Naive thymus-derived CD4-positive, alpha-beta T cell (primary cell): ENCODE measurements at regions of chr4 and their contacts with region 1.

Region 1: DNA sequence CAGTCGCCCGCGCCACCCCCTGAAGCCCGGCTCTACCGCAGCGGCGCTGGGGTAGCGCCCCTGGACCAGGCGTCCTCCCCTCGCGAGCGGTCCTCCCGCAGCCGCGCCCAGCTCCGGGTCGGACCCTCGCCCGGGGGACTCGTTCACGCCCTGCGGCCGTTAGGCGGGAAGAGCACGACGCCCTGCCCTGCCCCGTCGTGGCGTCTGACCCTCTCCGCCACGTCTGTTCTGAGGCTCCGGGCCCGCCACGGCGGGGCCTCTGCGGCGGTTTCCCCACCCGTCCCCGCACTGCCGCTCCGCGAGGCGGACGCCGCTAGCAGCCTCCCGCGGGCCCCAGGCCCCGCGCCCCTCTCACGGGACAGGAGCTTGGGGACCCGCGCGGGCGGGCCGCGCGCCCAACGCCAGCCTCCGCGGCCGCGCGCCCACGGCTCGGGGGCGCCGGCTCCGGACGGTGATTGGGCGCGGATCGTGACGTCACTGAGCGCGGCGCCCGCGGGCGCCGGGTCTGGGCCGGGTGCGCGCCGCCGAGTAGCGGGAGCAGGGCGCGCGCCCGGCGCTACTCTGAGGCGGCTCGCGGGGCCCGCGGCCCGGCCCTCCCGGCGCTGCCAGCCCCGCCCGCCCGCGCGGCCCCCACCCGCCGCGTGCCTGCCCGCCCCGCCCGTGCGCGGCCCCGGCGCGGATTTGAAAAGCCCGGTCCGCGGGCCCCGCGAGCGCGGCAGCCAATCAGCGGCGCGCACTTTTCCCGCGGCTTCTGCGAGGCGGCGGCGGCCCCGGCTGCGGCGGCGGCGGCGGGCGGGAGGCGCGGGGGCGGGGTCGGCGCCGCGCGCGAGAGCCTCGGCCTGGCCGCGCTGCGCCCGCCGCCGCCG is at the start of gene NSD2:
- DNase-seq: peak; percentile 79 to 95 (median 86)
- ATAC-seq: peak; percentile 86
- H3K4me3 ChIP-seq: peak within 1 kb of the TSS; percentile 86
- H3K4me3 Mint-ChIP-seq: peak within 1 kb of the TSS; percentile 84 to 98 (median 89)
- H3K27ac ChIP-seq: peak within 1 kb of the TSS; percentile 99
- H3K27ac Mint-ChIP-seq: peak within 1 kb of the TSS; percentile 91 to 96 (median 95)
- H3K4me1 ChIP-seq: peaks cover 15 to 20% of the 10 kb centered on the region in 2 donors
- H3K4me1 Mint-ChIP-seq: peaks cover 12 to 37% (median 34%) of the 10 kb centered on the region in 7 donors
- H3K27me3 ChIP-seq: no peaks in the 10 kb centered on the region
- H3K27me3 Mint-ChIP-seq: peaks cover 0 to 4% (median 0%) of the 10 kb centered on the region in 5 donors
- total RNA-seq, gene NSD2: 35.4 to 207 (median 38.5) TPM

Region 2: GRCh38 chr4:1139860-1140259 is 731.0 kb before region 1 on chr4:
- CTCF ChIA-PET with region 1: no interaction called
- POLR2A ChIA-PET with region 1: no interaction called
- intact Hi-C with region 1: no loop called
- DNase-seq: no peak
- ATAC-seq: no peak
- H3K4me3 ChIP-seq: no peak overlapping the region
- H3K4me3 Mint-ChIP-seq: no peak overlapping the region
- H3K27ac ChIP-seq: no peak overlapping the region
- H3K27ac Mint-ChIP-seq: no peak overlapping the region
- H3K4me1 ChIP-seq: peaks cover 0 to 13% of the 10 kb centered on the region in 2 donors
- H3K4me1 Mint-ChIP-seq: peaks cover 7 to 28% (median 22%) of the 10 kb centered on the region in 7 donors
- H3K27me3 ChIP-seq: no peaks in the 10 kb centered on the region
- H3K27me3 Mint-ChIP-seq: peaks cover 6 to 41% (median 7%) of the 10 kb centered on the region in 5 donors

Region 3: GRCh38 chr4:1683736-1684505 is 186.9 kb before region 1 on chr4 and contains the start of gene FAM53A:
- CTCF ChIA-PET with region 1: no interaction called
- POLR2A ChIA-PET with region 1: interaction called, 3 read pairs
- intact Hi-C with region 1: loop called (anchors 1 to 2 kb)
- DNase-seq: peak in 5 of 9 donors; percentile 23 to 99 (median 88)
- ATAC-seq: peak; percentile 98
- H3K4me3 ChIP-seq: peak within 1 kb of the TSS; percentile 51
- H3K4me3 Mint-ChIP-seq: peak within 1 kb of the TSS; percentile 86 to 97 (median 93)
- H3K27ac ChIP-seq: peak within 1 kb of the TSS; percentile 62
- H3K27ac Mint-ChIP-seq: peak within 1 kb of the TSS; percentile 86 to 98 (median 91)
- H3K4me1 ChIP-seq: peaks cover 0 to 4% of the 10 kb centered on the region in 2 donors
- H3K4me1 Mint-ChIP-seq: peaks cover 9 to 15% (median 12%) of the 10 kb centered on the region in 7 donors
- H3K27me3 ChIP-seq: no peaks in the 10 kb centered on the region
- H3K27me3 Mint-ChIP-seq: peaks cover 0 to 9% (median 0%) of the 10 kb centered on the region in 5 donors
- total RNA-seq, gene FAM53A: 1.2 to 3.6 (median 1.4) TPM

Region 4: GRCh38 chr4:1721004-1721665 is 149.7 kb before region 1 on chr4 and contains the starts of genes TACC3 and TMEM129:
- CTCF ChIA-PET with region 1: no interaction called
- POLR2A ChIA-PET with region 1: interaction called, 8 read pairs
- intact Hi-C with region 1: loop called (anchors 2 kb)
- DNase-seq: peak; percentile 79 to 97 (median 95)
- ATAC-seq: peak; percentile 92
- H3K4me3 ChIP-seq: peak within 1 kb of the TSS; percentile 70
- H3K4me3 Mint-ChIP-seq: peak within 1 kb of the TSS; percentile 79 to 97 (median 93)
- H3K27ac ChIP-seq: peak within 1 kb of the TSS; percentile 88
- H3K27ac Mint-ChIP-seq: peak within 1 kb of the TSS; percentile 98 to 100 (median 99)
- H3K4me1 ChIP-seq: peaks cover 45 to 52% of the 10 kb centered on the region in 2 donors
- H3K4me1 Mint-ChIP-seq: peaks cover 25 to 56% (median 52%) of the 10 kb centered on the region in 7 donors
- H3K27me3 ChIP-seq: no peaks in the 10 kb centered on the region
- H3K27me3 Mint-ChIP-seq: no peaks in the 10 kb centered on the region
- total RNA-seq, gene TACC3: 100 to 165 (median 162) TPM
- total RNA-seq, gene TMEM129: 20.0 to 41.1 (median 26.7) TPM

Region 5: GRCh38 chr4:1887052-1887451 is 16.2 kb after region 1 on chr4:
- CTCF ChIA-PET with region 1: interaction called, 4 read pairs
- POLR2A ChIA-PET with region 1: no interaction called
- intact Hi-C with region 1: loop called in 1 of 2 experiments (anchors 2 kb)
- DNase-seq: no peak
- ATAC-seq: no peak
- H3K4me3 ChIP-seq: no peak overlapping the region
- H3K4me3 Mint-ChIP-seq: no peak overlapping the region
- H3K27ac ChIP-seq: no peak overlapping the region
- H3K27ac Mint-ChIP-seq: peak overlapping the region in 4 of 9 donors; percentile 38 to 84 (median 60)
- H3K4me1 ChIP-seq: no peaks in the 10 kb centered on the region
- H3K4me1 Mint-ChIP-seq: peaks cover 7 to 41% (median 22%) of the 10 kb centered on the region in 7 donors
- H3K27me3 ChIP-seq: no peaks in the 10 kb centered on the region
- H3K27me3 Mint-ChIP-seq: no peaks in the 10 kb centered on the region

Region 6: GRCh38 chr4:2008875-2009703 is 138.3 kb after region 1 on chr4 and contains the start of gene NELFA:
- CTCF ChIA-PET with region 1: no interaction called
- POLR2A ChIA-PET with region 1: interaction called, 5 read pairs
- intact Hi-C with region 1: loop called (anchors 1 to 2 kb)
- DNase-seq: peak; percentile 92 to 98 (median 96)
- ATAC-seq: peak; percentile 93
- H3K4me3 ChIP-seq: peak within 1 kb of the TSS; percentile 96
- H3K4me3 Mint-ChIP-seq: peak within 1 kb of the TSS; percentile 81 to 96 (median 94)
- H3K27ac ChIP-seq: peak within 1 kb of the TSS; percentile 99
- H3K27ac Mint-ChIP-seq: peak within 1 kb of the TSS; percentile 91 to 99 (median 96)
- H3K4me1 ChIP-seq: peaks cover 13 to 24% of the 10 kb centered on the region in 2 donors
- H3K4me1 Mint-ChIP-seq: peaks cover 30 to 38% (median 34%) of the 10 kb centered on the region in 7 donors
- H3K27me3 ChIP-seq: no peaks in the 10 kb centered on the region
- H3K27me3 Mint-ChIP-seq: peaks cover 0 to 20% (median 0%) of the 10 kb centered on the region in 5 donors
- total RNA-seq, gene NELFA: 32.7 to 50.1 (median 43.6) TPM